ENCODE measurements at regions of chr6 and their contacts with region 1.

Region 1: GRCh38 chr6:150813319-150813992 is 52.0 kb upstream of the MTHFD1L start:
- DNase-seq: peak; percentile 86
- ATAC-seq: peak; percentile 79
- H3K4me3 Mint-ChIP-seq: peak overlapping the region; percentile 8
- H3K27ac Mint-ChIP-seq: peak overlapping the region; percentile 94
- H3K4me1 Mint-ChIP-seq: peaks cover 28% of the 10 kb centered on the region
- H3K27me3 Mint-ChIP-seq: peaks cover 12% of the 10 kb centered on the region

Region 2: GRCh38 chr6:150079604-150080003 is 733.9 kb before region 1 on chr6:
- CTCF ChIA-PET with region 1: interaction called, 12 read pairs
- POLR2A ChIA-PET with region 1: no interaction called
- intact Hi-C with region 1: loop called (anchors 1 kb)
- DNase-seq: peak; percentile 18
- ATAC-seq: peak; percentile 70
- H3K4me3 Mint-ChIP-seq: no peak overlapping the region
- H3K27ac Mint-ChIP-seq: no peak overlapping the region
- H3K4me1 Mint-ChIP-seq: peaks cover 22% of the 10 kb centered on the region
- H3K27me3 Mint-ChIP-seq: peaks cover 22% of the 10 kb centered on the region

Region 3: GRCh38 chr6:150334790-150335783 is 478.4 kb before region 1 on chr6:
- CTCF ChIA-PET with region 1: interaction called, 4 read pairs
- POLR2A ChIA-PET with region 1: no interaction called
- intact Hi-C with region 1: loop called in 1 of 2 experiments (anchors 2 kb)
- DNase-seq: peak; percentile 61
- ATAC-seq: no peak
- H3K4me3 Mint-ChIP-seq: no peak overlapping the region
- H3K27ac Mint-ChIP-seq: no peak overlapping the region
- H3K4me1 Mint-ChIP-seq: no peaks in the 10 kb centered on the region
- H3K27me3 Mint-ChIP-seq: peaks cover 11% of the 10 kb centered on the region

Region 4: DNA sequence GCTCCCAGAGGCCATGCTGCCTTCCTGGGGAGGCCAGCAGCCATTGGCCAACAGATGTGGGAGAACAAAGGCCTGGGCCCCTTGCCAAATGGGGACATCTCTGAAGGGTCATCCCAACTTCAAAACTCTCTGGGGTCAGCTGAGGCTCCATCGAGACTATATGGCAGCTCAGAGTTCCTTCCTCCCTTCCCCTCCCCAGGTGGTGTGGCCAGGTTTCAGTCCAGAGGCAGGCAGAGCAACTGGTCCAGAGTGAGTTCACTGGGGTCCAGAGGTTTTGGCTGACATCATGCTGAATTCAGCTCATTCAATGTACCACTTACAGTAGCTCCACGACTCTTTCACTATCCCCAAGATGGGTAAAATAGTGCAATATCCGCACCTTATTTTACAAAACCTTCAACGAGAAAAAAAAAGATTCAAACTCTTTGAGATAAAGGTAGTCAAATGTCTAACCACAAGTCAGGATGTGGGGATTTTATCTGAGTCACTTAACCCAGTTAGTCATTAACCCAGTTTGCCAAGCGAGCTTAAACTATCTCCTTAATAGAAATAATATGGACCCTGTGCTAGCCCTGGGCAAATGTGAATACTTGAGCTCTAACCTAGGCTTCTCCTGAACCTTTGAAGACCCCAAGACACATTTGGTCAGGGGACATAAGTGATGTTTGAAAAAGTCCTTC is 322.2 kb before region 1 on chr6:
- CTCF ChIA-PET with region 1: interaction called, 9 read pairs
- POLR2A ChIA-PET with region 1: interaction called, 6 read pairs
- intact Hi-C with region 1: loop called in 1 of 2 experiments (anchors 2 kb)
- DNase-seq: peak; percentile 36
- ATAC-seq: peak; percentile 89
- H3K4me3 Mint-ChIP-seq: peak overlapping the region; percentile 34
- H3K27ac Mint-ChIP-seq: peak overlapping the region; percentile 74
- H3K4me1 Mint-ChIP-seq: peaks cover 26% of the 10 kb centered on the region
- H3K27me3 Mint-ChIP-seq: no peaks in the 10 kb centered on the region

Region 5: DNA sequence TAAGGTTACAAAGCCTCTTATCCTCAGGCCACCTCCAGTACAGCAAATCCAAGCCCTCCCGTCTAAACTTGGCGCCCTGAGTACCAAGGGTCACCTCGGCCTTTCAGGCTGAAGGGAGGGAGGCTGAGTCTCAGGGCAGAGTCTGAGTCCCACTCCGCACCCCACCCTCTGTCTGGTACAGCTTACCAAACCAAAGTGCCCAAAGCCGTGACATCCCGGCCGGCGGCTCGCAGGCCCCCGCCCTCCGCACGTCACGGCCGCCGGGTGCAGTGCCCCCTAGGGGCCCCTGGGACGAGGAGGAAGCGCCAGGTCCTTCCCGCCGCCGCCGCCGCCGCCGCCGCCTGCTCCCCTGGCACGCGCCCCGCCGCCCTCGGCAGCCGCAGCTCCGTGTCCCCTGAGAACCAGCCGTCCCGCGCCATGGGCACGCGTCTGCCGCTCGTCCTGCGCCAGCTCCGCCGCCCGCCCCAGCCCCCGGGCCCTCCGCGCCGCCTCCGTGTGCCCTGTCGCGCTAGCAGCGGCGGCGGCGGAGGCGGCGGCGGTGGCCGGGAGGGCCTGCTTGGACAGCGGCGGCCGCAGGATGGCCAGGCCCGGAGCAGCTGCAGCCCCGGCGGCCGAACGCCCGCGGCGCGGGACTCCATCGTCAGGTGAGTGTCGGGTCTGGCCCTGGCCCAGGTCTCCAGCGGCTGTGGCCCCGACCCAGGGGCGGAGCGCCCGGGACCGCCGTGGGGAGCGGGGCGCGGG is 52.1 kb after region 1 on chr6 and contains the start of gene MTHFD1L:
- CTCF ChIA-PET with region 1: interaction called, 6 read pairs
- POLR2A ChIA-PET with region 1: no interaction called
- intact Hi-C with region 1: loop called (anchors 2 to 5 kb)
- DNase-seq: peak; percentile 89
- ATAC-seq: peak; percentile 74
- H3K4me3 Mint-ChIP-seq: peak within 1 kb of the TSS; percentile 81
- H3K27ac Mint-ChIP-seq: peak within 1 kb of the TSS; percentile 94
- H3K4me1 Mint-ChIP-seq: peaks cover 38% of the 10 kb centered on the region
- H3K27me3 Mint-ChIP-seq: peaks cover 12% of the 10 kb centered on the region
- total RNA-seq, gene MTHFD1L: 103 to 129 TPM

Region 6: DNA sequence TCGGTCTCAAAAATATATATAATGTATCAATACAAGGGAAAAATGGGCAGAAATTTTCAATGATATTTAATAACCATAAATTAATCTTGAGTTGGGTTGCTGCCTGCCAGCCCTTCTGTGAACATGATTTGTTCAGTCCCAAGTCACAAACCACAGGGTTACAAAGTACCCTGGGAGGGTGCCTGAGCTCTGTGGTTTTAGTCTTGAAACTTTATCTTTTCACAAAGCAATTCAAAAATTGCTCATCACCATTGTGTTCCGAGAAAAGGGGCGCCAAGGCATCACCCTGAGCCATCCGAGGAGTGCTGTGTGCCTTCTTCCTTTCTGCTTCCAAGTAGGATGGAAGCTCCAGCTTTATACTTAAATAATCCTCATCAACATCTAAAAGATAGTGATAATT is 284.7 kb after region 1 on chr6:
- CTCF ChIA-PET with region 1: no interaction called
- POLR2A ChIA-PET with region 1: no interaction called
- intact Hi-C with region 1: no loop called
- DNase-seq: peak; percentile 48
- ATAC-seq: peak; percentile 80
- H3K4me3 Mint-ChIP-seq: no peak overlapping the region
- H3K27ac Mint-ChIP-seq: no peak overlapping the region
- H3K4me1 Mint-ChIP-seq: peaks cover 12% of the 10 kb centered on the region
- H3K27me3 Mint-ChIP-seq: no peaks in the 10 kb centered on the region